CD14-positive monocyte (primary cell): ENCODE measurements at regions of chr6 and their contacts with region 1.

Region 1: DNA sequence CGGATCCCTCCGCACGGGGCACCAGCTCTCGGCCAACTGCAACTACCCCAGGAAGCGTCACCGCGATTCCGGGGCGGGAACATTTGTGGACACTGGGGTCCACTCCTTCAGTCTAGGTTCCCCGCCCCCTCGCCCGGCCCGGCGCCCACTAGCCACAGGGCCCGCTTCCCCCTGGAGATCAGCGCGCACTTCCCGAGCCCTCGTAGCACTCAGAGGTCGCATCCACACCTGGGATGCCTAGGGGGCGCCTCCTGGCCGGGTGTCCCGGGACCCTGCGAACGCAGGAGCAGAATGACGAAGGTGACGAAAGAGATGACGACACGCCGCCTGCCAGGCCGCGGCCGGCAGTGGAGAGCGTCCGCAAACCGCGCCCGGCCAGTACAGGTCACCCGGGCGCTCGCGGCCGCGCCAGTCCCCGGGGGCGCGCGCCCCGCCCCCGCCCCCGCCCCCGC is 309 bp upstream of the AIG1 start:
- DNase-seq: peak; percentile 90 to 93 (median 93)
- H3K4me3 ChIP-seq: peak overlapping the region; percentile 76 to 93 (median 91)
- H3K4me3 Mint-ChIP-seq: peak overlapping the region; percentile 90 to 96
- H3K27ac ChIP-seq: peak overlapping the region; percentile 83 to 88
- H3K27ac Mint-ChIP-seq: peak overlapping the region; percentile 93 to 99 (median 97)
- H3K4me1 ChIP-seq: peaks cover 15 to 19% of the 10 kb centered on the region in 2 donors
- H3K4me1 Mint-ChIP-seq: peaks cover 16% of the 10 kb centered on the region
- H3K27me3 ChIP-seq: no peaks in the 10 kb centered on the region
- H3K27me3 Mint-ChIP-seq: peaks cover 0 to 2% (median 0%) of the 10 kb centered on the region in 3 donors
- CTCF ChIP-seq: peak; percentile 14

Region 2: GRCh38 chr6:142802124-142802523 is 258.3 kb before region 1 on chr6:
- intact Hi-C with region 1: no loop called
- DNase-seq: peak in 1 of 3 donors; percentile 58
- H3K4me3 ChIP-seq: no peak overlapping the region
- H3K4me3 Mint-ChIP-seq: no peak overlapping the region
- H3K27ac ChIP-seq: no peak overlapping the region
- H3K27ac Mint-ChIP-seq: no peak overlapping the region
- H3K4me1 ChIP-seq: no peaks in the 10 kb centered on the region
- H3K4me1 Mint-ChIP-seq: no peaks in the 10 kb centered on the region
- H3K27me3 ChIP-seq: no peaks in the 10 kb centered on the region
- H3K27me3 Mint-ChIP-seq: peaks cover 0 to 2% (median 2%) of the 10 kb centered on the region in 3 donors
- CTCF ChIP-seq: no peak

Region 3: GRCh38 chr6:143293523-143293922 is 233.1 kb after region 1 on chr6:
- intact Hi-C with region 1: no loop called
- DNase-seq: no peak
- H3K4me3 ChIP-seq: no peak overlapping the region
- H3K4me3 Mint-ChIP-seq: no peak overlapping the region
- H3K27ac ChIP-seq: no peak overlapping the region
- H3K27ac Mint-ChIP-seq: no peak overlapping the region
- H3K4me1 ChIP-seq: no peaks in the 10 kb centered on the region
- H3K4me1 Mint-ChIP-seq: no peaks in the 10 kb centered on the region
- H3K27me3 ChIP-seq: no peaks in the 10 kb centered on the region
- H3K27me3 Mint-ChIP-seq: no peaks in the 10 kb centered on the region
- CTCF ChIP-seq: no peak

Region 4: DNA sequence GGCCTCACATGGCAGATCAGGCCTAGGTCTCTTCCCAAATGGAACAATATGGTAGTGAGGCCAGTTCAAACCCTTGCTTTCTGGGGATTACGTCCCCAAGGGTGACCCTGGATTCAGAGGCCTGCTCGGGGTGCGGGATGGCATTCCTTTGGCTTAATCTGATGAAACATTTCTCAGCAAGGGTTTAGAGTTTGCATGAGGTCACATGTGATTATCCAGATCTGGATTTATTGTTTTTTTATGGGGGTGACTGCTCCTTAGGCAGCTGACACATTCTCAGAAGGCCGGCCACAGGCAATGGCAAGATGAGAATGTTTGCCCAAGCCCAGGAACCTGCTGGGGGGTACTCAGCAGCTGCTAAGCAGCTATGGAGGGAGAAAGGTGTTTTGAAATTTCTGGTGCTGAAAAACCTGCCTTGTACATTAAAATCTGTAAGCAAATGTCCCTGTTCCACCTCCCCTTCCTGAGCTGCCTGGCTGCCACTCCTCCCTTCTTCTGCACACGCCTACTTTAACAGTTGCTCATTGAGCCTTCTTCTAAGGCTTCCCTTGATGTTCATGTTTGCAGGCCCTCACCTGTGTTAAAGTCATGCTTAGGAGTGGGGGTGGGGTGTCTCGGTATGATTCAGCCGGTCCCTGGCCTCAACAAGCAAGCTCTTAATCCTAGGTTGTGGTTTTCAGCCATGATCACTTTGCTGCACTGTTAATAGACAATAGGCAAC is 489.0 kb after region 1 on chr6:
- intact Hi-C with region 1: loop called in 1 of 2 experiments (anchors 10 kb)
- DNase-seq: no peak
- H3K4me3 ChIP-seq: no peak overlapping the region
- H3K4me3 Mint-ChIP-seq: no peak overlapping the region
- H3K27ac ChIP-seq: no peak overlapping the region
- H3K27ac Mint-ChIP-seq: peak overlapping the region in 2 of 7 donors; percentile 50 to 71
- H3K4me1 ChIP-seq: peaks cover 0 to under 1% of the 10 kb centered on the region in 2 donors
- H3K4me1 Mint-ChIP-seq: peaks cover 25% of the 10 kb centered on the region
- H3K27me3 ChIP-seq: no peaks in the 10 kb centered on the region
- H3K27me3 Mint-ChIP-seq: no peaks in the 10 kb centered on the region
- CTCF ChIP-seq: no peak